ENCODE measurements at regions of chr17 and their contacts with region 1.

Region 1: DNA sequence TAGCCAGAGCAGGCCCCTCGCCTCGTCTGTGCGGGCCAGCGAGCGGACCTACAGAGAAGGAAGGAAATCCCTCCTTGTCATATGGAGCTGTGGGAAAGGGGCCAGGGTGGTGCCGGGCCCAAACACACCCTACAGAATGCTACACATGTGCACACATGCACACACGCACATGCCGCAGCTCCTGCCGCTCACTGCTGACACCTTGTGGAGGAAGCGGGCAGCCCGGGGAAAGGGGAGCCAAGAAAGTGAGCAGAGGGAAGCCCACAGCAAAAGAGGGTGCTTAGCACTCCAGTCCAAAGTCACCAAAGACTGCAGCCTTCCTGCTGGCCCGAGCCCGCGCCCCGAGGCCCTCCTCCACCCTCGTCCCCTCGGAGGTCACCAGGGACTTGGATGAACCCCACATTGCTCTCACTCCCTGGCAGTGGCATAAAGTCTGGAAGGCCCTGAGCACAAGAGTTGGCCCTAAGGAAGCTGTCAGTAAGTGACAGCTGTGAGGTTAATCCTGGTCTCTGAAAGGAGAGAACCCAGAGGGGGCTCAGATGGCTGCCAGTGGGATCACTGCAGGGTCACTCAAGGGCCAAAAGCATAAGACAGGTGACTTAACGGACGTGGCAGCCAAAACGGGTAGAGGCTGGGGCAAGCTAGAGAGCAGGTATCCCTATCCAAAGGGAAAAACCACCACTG is 68.2 kb downstream of the MYO18A start:
- DNase-seq: peak; percentile 77
- H3K4me3 Mint-ChIP-seq: no peak overlapping the region
- H3K27ac Mint-ChIP-seq: no peak overlapping the region
- H3K4me1 Mint-ChIP-seq: peaks cover 5% of the 10 kb centered on the region
- H3K27me3 Mint-ChIP-seq: no peaks in the 10 kb centered on the region

Region 2: DNA sequence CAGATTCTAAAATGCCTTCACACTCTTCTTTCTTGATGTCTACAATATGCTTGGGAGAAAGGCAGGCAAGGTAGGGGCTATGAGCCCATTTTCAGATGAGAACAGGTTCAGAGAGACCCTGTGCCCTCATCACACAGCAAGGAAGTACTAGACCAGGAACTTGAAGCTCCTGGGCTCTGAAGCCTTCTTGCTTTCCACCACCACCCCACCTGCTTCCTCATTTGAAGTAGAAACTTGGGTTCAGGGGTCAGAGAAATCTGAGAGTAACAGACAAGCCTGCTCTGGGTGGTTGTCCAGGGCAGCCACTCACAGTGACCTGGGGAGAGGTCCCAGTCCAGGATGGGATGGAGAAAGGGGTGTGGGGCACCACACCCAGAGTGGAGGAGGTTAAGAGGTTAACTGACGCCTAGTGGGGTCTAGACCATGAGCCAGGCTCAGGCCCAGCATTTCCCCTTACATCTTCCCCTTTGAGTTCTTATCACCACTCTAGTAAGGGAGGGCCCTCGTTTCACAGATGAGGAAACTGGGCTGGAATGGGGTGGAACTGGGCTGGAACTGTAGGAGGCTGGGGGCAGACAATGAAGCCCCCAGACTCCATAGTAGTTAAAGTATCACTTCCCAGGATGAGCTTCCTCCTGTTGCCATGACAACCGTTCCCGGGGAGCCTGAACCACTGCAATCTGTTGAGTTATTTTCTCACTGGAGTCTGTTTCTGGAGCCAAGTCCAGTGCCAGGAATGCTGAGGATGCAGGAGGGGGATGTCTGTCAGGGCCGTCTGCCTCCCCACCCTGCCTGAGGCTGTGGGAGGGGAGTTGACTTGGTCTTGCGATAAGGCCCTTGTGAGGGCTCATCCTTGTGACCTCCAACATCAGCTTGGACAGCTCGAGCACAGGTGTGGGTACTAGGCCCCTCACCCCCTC is 144.5 kb before region 1 on chr17:
- CTCF ChIA-PET with region 1: interaction called, 283 read pairs
- DNase-seq: no peak
- H3K4me3 Mint-ChIP-seq: no peak overlapping the region
- H3K27ac Mint-ChIP-seq: no peak overlapping the region
- H3K4me1 Mint-ChIP-seq: no peaks in the 10 kb centered on the region
- H3K27me3 Mint-ChIP-seq: peaks cover 51% of the 10 kb centered on the region

Region 3: GRCh38 chr17:29039764-29040598 is 72.0 kb before region 1 on chr17:
- CTCF ChIA-PET with region 1: no interaction called
- DNase-seq: no peak
- H3K4me3 Mint-ChIP-seq: no peak overlapping the region
- H3K27ac Mint-ChIP-seq: no peak overlapping the region
- H3K4me1 Mint-ChIP-seq: no peaks in the 10 kb centered on the region
- H3K27me3 Mint-ChIP-seq: peaks cover 50% of the 10 kb centered on the region

Region 4: GRCh38 chr17:29124117-29124924 is 12.4 kb after region 1 on chr17:
- CTCF ChIA-PET with region 1: interaction called, 73 read pairs
- DNase-seq: peak; percentile 66
- H3K4me3 Mint-ChIP-seq: no peak overlapping the region
- H3K27ac Mint-ChIP-seq: no peak overlapping the region
- H3K4me1 Mint-ChIP-seq: peaks cover 3% of the 10 kb centered on the region
- H3K27me3 Mint-ChIP-seq: no peaks in the 10 kb centered on the region

Measured in activated naive CD4-positive, alpha-beta T cell treated with anti-CD3 and anti-CD28 coated beads, Interleukin-2, amount 10 ng/mL, durations not matched to agents 7 days and 5 days (primary cell).